Naive thymus-derived CD4-positive, alpha-beta T cell (primary cell): ENCODE measurements at regions of chr2 and their contacts with region 1.

Region 1: DNA sequence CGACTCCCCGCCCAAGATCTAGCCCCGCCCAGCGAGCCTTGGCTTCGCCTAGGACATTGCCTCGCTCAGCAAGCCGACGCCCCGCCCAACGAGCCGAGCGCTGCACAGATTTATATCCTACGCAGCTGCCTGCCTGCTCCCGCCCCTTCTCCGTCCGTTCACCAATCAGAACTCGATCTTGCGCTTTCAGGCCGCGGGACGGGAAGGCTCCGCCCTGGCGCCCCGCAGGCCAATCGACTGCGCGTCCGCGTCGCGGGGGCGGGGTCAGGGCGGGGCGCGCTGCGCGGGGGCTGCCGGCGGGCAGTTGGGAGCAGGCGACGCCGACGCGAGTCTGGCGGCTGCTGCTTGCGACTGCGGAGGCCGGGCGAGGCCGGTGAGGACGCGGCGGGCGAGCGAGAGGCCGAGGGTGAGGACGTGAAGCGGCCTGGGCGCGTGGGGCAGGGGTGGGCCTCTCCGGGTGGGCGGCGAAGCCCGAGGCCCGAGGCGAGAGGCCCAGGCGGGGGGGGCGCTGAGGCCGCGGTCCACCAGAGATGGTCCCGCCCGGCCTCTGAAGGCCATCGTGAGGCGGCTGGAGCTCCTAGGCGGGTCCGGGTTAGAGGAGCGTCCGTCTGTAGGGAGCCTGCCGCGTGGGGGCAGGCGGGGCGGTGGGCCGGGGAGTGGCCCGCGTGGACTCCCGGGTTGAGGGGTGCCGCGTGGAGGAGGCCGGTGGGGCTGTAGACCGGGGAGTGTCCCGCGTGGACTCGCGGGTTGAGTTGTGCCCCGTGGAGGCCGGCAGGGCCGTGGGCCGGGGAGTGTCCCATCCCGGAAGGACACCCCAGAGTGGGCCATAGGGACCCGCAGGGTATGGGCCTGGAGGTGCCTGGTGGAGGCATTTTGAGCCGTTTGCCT is at the start of gene FARP2:
- DNase-seq: peak; percentile 91 to 99 (median 97)
- ATAC-seq: peak; percentile 93
- H3K4me3 ChIP-seq: peak within 1 kb of the TSS; percentile 54
- H3K4me3 Mint-ChIP-seq: peak within 1 kb of the TSS; percentile 75 to 92 (median 85)
- H3K27ac ChIP-seq: peak within 1 kb of the TSS; percentile 72
- H3K27ac Mint-ChIP-seq: peak within 1 kb of the TSS in 8 of 9 donors; percentile 80 to 95 (median 90)
- H3K4me1 ChIP-seq: peaks cover 6 to 7% of the 10 kb centered on the region in 2 donors
- H3K4me1 Mint-ChIP-seq: peaks cover 5 to 34% (median 19%) of the 10 kb centered on the region in 7 donors
- H3K27me3 ChIP-seq: no peaks in the 10 kb centered on the region
- H3K27me3 Mint-ChIP-seq: no peaks in the 10 kb centered on the region
- total RNA-seq, gene FARP2: 12.4 to 31.0 (median 22.1) TPM

Region 2: GRCh38 chr2:241271641-241272297 is 84.5 kb before region 1 on chr2:
- CTCF ChIA-PET with region 1: no interaction called
- POLR2A ChIA-PET with region 1: no interaction called
- intact Hi-C with region 1: loop called (anchors 2 to 5 kb)
- DNase-seq: peak; percentile 37 to 69 (median 42)
- ATAC-seq: peak; percentile 83
- H3K4me3 ChIP-seq: peak overlapping the region; percentile 63
- H3K4me3 Mint-ChIP-seq: peak overlapping the region; percentile 91 to 97 (median 94)
- H3K27ac ChIP-seq: peak overlapping the region; percentile 76
- H3K27ac Mint-ChIP-seq: peak overlapping the region; percentile 70 to 94 (median 89)
- H3K4me1 ChIP-seq: peaks cover 8 to 16% of the 10 kb centered on the region in 2 donors
- H3K4me1 Mint-ChIP-seq: peaks cover 41 to 65% (median 60%) of the 10 kb centered on the region in 7 donors
- H3K27me3 ChIP-seq: no peaks in the 10 kb centered on the region
- H3K27me3 Mint-ChIP-seq: no peaks in the 10 kb centered on the region

Region 3: DNA sequence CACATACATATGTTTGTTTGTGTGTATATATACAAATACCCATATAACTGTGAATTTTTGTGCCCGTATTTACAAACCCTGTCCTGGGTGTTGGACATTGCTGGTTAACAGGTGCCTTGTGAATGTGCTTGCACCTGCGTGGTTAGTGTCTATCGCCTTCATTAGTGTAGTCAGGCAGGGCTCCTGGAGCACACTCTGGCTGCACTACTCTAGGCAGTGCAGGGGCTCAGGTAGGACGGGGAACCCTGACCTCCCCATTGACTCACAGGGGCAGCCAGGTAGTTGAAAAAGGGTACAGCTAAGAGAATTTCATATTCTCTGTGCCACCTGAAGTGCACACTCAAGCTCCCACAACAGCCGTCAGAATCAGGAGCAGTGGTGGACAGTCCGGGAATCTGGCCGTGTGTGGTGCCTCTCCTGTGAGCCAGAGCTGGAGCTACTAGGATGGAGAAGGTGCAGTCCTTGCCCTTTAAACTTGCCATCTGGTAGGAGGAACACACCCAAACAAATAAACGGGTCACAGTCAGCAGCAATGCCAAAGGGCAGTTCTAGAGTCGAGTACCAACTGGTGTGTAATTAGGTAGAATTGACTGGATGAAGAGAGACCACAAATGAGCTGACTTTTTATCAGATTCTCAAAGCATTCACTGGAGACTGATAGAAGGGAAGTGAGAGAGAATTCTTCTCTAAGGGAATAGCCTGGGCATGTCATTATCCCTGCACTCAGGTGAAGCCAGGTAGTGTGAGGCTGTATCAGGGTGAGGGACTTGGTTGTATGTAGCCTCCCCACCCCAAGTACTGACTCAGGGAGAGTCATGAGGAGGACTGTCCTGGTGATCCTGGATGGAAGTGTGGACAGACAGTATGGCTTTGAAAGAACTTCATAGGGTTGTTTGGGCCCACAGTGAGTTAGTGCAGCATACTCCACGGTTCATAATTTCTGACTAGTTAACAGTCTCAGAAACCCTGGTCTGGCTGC is 44.0 kb after region 1 on chr2:
- CTCF ChIA-PET with region 1: no interaction called
- POLR2A ChIA-PET with region 1: no interaction called
- intact Hi-C with region 1: no loop called
- DNase-seq: no peak
- ATAC-seq: no peak
- H3K4me3 ChIP-seq: no peak overlapping the region
- H3K4me3 Mint-ChIP-seq: no peak overlapping the region
- H3K27ac ChIP-seq: no peak overlapping the region
- H3K27ac Mint-ChIP-seq: peak overlapping the region in 1 of 9 donors; percentile 44
- H3K4me1 ChIP-seq: no peaks in the 10 kb centered on the region
- H3K4me1 Mint-ChIP-seq: no peaks in the 10 kb centered on the region
- H3K27me3 ChIP-seq: no peaks in the 10 kb centered on the region
- H3K27me3 Mint-ChIP-seq: no peaks in the 10 kb centered on the region

Region 4: GRCh38 chr2:241412144-241412543 is 55.9 kb after region 1 on chr2:
- CTCF ChIA-PET with region 1: no interaction called
- POLR2A ChIA-PET with region 1: no interaction called
- intact Hi-C with region 1: no loop called
- DNase-seq: no peak
- ATAC-seq: no peak
- H3K4me3 ChIP-seq: no peak overlapping the region
- H3K4me3 Mint-ChIP-seq: no peak overlapping the region
- H3K27ac ChIP-seq: no peak overlapping the region
- H3K27ac Mint-ChIP-seq: no peak overlapping the region
- H3K4me1 ChIP-seq: no peaks in the 10 kb centered on the region
- H3K4me1 Mint-ChIP-seq: no peaks in the 10 kb centered on the region
- H3K27me3 ChIP-seq: no peaks in the 10 kb centered on the region
- H3K27me3 Mint-ChIP-seq: no peaks in the 10 kb centered on the region

Region 5: DNA sequence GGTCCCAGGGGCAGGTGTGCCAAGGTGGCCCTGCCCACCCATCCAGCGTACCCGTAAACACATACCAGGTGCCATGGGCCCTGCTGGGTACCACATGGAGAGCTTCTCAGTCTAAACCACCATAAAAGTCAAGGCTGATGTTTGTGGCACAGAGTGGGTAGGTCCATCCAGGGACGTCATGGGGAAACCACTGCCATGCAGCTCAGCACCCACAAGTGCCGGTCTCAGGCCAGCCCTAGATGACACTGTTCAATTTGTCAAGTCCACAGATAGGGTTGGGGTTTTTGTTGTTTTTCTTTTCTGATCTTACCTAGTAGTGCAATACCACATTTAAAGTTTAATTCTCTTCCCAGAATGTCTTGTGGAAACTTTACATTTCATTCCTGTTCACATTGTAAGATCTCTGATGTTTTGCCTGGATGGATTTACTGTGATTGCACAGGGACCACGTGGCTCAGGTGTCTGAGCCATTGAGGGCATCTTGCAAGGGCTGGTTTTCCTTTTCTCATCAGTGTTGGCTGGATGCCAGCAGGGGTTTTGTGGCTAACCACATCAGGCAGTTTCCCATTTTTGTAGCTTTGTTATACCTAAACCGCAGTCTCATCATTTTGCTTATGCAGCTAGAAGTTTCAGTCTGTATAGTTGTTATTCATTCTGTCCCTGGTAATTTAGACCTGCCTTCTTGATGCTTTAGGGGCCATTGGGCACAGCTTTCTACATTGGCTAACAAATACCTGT is 87.4 kb after region 1 on chr2:
- CTCF ChIA-PET with region 1: no interaction called
- POLR2A ChIA-PET with region 1: no interaction called
- intact Hi-C with region 1: loop called in 1 of 2 experiments (anchors 5 kb)
- DNase-seq: peak; percentile 76 to 98 (median 94)
- ATAC-seq: peak; percentile 85
- H3K4me3 ChIP-seq: no peak overlapping the region
- H3K4me3 Mint-ChIP-seq: peak overlapping the region in 8 of 10 donors; percentile 20 to 80 (median 44)
- H3K27ac ChIP-seq: no peak overlapping the region
- H3K27ac Mint-ChIP-seq: peak overlapping the region; percentile 2 to 96 (median 68)
- H3K4me1 ChIP-seq: peaks cover 16 to 17% of the 10 kb centered on the region in 2 donors
- H3K4me1 Mint-ChIP-seq: peaks cover 13 to 25% (median 21%) of the 10 kb centered on the region in 7 donors
- H3K27me3 ChIP-seq: peaks cover 9 to 35% of the 10 kb centered on the region in 2 donors
- H3K27me3 Mint-ChIP-seq: peaks cover 35 to 80% (median 59%) of the 10 kb centered on the region in 5 donors

Region 6: DNA sequence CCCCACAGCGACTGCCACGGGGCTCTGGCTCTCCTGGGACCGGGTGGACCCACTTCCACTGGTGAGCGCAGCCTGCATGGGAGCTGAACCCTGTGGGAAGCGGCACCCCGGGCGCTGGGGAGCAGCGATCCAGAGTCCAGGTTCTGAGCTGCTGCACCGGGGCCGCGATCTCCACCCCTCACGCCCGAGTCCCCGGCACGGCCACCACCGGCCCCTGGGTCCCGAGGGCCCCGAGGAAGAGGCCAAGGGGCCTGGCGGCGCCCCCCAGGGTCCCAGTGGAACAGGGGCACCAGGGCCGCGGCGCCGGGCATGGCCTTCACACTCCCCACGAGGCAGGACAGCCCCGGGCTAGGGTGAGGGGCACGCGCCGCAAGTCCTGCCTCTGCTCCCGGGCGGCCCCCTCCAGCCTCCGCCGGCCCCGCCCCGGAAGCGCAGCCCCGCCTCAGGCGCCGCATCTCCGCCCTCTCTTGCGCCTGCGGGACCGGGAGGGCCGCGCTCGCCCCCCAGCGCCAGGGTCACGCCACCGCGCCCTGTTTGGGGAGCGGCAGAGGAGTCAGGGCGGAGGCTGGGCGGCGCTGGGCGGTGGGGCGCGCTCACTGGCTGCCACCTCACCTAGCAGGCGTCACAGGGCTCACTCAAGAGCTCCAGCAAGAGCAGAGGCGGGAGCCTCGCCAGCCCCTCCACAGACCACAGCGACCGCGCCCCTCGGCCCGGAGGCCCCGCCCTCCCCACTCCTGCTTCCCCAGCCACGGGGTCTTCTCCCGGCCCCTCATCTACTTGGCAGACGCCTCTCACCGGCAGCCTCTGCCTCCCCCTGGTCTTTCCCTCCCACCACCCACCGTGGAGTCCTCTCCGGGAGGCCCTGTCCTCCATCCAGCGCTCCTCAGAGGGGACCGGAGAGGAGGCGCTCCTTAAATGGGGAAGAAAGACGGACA is 253.9 kb after region 1 on chr2:
- CTCF ChIA-PET with region 1: no interaction called
- POLR2A ChIA-PET with region 1: no interaction called
- intact Hi-C with region 1: loop called (anchors 1 kb)
- DNase-seq: peak; percentile 87 to 92 (median 90)
- ATAC-seq: peak; percentile 99
- H3K4me3 ChIP-seq: peak overlapping the region; percentile 53
- H3K4me3 Mint-ChIP-seq: peak overlapping the region in 9 of 10 donors; percentile 61 to 79 (median 71)
- H3K27ac ChIP-seq: peak overlapping the region; percentile 61
- H3K27ac Mint-ChIP-seq: peak overlapping the region; percentile 9 to 95 (median 68)
- H3K4me1 ChIP-seq: peaks cover 14 to 17% of the 10 kb centered on the region in 2 donors
- H3K4me1 Mint-ChIP-seq: peaks cover 16 to 33% (median 24%) of the 10 kb centered on the region in 7 donors
- H3K27me3 ChIP-seq: no peaks in the 10 kb centered on the region
- H3K27me3 Mint-ChIP-seq: no peaks in the 10 kb centered on the region

Region 7: DNA sequence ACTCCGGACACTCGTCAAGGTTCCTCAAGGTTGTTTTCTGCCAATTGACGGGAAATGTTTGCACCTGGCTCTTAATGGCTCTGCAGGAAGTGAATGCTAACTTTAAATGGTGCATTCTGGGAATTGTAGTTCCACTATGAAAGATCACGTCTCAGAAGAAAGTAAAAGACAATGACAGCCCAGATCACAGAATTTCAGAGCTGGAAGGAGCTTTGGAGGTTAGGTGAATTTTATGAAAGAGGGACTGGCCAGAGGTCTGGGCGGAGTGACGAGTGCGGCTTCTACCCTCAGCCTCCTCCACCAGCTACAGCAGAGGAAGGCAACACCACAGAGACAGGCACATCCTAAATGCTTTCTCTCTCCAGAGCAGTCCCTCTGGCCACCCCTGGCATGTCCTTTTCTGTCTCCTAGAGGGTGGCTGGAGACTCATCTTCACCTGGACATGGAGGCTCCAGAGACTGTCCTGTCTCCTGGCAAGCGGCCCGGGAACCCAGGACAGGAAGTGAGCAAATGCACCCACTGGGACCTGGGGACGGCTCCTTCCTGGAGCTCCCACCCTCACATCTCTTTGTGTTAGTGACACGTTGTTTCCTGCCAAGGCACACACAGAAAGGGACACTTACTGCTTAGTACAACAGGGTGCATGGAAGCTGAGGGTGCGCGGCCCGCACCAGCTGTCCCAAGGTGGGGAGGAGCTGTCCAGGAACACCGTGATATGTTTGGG is 261.4 kb after region 1 on chr2:
- CTCF ChIA-PET with region 1: no interaction called
- POLR2A ChIA-PET with region 1: no interaction called
- intact Hi-C with region 1: loop called in 1 of 2 experiments (anchors 1 kb)
- DNase-seq: peak in 8 of 9 donors; percentile 41 to 71 (median 60)
- ATAC-seq: peak; percentile 77
- H3K4me3 ChIP-seq: peak overlapping the region; percentile 68
- H3K4me3 Mint-ChIP-seq: peak overlapping the region; percentile 79 to 96 (median 91)
- H3K27ac ChIP-seq: peak overlapping the region; percentile 75
- H3K27ac Mint-ChIP-seq: peak overlapping the region; percentile 85 to 98 (median 94)
- H3K4me1 ChIP-seq: peaks cover 13 to 18% of the 10 kb centered on the region in 2 donors
- H3K4me1 Mint-ChIP-seq: peaks cover 23 to 49% (median 43%) of the 10 kb centered on the region in 7 donors
- H3K27me3 ChIP-seq: no peaks in the 10 kb centered on the region
- H3K27me3 Mint-ChIP-seq: no peaks in the 10 kb centered on the region

Region 8: DNA sequence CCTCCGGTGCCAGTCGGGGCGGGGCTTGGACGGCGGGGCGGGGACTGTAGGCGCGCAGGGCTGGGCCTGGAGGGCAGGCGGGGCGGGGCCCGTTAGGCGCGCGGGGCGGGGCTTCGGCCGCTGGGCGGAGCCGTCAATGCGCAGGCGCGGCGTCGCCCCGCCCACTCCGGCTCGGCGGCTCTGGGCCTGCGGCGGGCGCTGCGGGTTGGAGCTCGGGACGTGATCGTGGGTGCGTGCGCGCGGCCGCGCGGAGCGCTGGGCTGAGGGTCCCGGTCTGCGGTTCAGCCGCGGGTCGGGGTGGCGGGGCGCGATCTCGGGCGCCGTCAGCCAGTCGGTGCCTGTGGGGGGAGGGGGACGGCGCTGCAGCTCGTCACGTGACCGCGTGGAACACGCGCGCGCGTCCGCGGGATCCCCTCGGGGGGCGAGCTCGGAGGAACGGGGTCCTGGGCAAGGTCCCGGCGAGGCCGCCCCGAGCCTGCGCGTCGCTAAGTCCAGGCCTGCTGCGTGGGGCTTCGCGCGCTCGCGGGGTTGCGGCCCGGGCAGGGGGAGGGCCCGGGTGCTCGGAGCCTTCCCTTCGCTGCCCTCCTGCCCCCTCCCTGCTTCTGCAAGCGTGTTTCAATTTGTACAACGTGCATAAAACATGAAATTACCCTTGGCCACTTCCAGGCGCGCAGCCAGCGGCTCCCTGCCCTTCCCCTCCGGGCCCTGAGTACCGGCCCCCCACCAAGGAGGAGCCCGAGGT is 378.4 kb after region 1 on chr2 and contains the start of gene D2HGDH:
- CTCF ChIA-PET with region 1: no interaction called
- POLR2A ChIA-PET with region 1: no interaction called
- intact Hi-C with region 1: loop called (anchors 2 kb)
- DNase-seq: peak; percentile 85 to 99 (median 91)
- ATAC-seq: peak; percentile 98
- H3K4me3 ChIP-seq: peak within 1 kb of the TSS; percentile 88
- H3K4me3 Mint-ChIP-seq: peak within 1 kb of the TSS; percentile 79 to 89 (median 84)
- H3K27ac ChIP-seq: peak within 1 kb of the TSS; percentile 75
- H3K27ac Mint-ChIP-seq: peak within 1 kb of the TSS in 8 of 9 donors; percentile 40 to 79 (median 72)
- H3K4me1 ChIP-seq: peaks cover 9% of the 10 kb centered on the region in 2 donors
- H3K4me1 Mint-ChIP-seq: peaks cover 9 to 54% (median 43%) of the 10 kb centered on the region in 7 donors
- H3K27me3 ChIP-seq: no peaks in the 10 kb centered on the region
- H3K27me3 Mint-ChIP-seq: no peaks in the 10 kb centered on the region
- total RNA-seq, gene D2HGDH: 32.5 to 49.8 (median 41.1) TPM